Left ventricle myocardium inferior (tissue), 1 donor: ENCODE measurements at regions of chr22 and their contacts with region 1.

Region 1: DNA sequence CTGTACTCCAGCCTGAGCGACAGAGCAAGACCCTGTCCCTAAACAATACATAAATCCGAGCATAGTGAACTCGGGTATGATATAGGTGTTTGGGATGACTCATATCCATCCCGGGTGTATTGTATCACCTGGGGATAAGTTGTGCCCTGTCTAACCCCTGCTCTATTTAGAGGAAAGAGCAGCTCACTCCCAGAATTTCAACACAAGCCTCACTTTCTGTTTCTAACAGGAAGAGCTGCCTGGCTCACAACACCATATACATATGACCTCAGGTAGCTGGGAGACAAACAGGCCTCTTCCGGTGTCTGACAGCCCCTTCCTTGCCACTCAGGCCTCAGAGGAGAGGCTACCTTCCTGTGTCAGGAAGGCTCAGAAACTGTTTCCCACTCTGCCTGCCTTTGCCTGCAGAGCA is 9.9 kb upstream of the MICALL1 start:
- DNase-seq: no peak
- H3K4me3 ChIP-seq: no peak overlapping the region
- H3K27ac ChIP-seq: peak overlapping the region; percentile 72
- H3K4me1 ChIP-seq: peaks cover 48% of the 10 kb centered on the region
- H3K27me3 ChIP-seq: no peaks in the 10 kb centered on the region
- CTCF ChIP-seq: no peak

Region 2: DNA sequence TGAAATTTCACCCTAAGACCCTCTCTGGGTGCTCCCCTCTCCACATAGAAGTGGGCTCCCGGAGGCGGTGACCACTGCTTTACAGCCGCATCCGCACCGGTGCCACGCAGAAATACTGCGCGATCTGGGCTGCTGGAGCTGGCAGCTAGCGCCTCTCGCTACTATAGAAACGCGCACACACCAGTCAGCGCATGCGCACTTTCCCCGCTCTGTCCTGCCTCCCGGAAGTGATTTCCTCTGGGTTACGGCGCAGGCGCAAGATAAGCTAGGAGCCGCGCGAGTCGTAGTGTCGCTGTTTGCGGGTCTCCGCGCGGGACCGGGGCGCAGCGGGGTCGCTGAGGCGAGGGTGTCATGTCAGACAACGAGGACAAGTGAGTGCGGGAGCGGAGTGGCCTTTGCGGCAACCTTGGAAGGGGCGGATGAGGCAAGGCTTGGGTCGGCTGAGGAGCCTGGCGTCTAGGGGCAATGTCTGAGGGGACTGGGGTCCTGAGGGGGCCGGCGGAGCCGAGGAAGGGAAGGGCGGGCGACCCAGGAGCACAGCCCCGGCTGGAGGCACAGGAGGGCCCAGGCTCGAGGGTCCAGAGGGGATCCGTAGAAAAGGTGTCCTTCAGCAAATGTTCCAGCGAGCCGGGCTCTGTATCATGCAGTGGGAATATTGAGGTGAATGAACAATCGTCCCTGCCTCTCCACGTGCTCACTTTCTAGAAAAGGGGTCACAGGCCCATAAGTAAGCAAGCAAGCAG is 57.4 kb after region 1 on chr22 and contains the starts of genes C22orf23 and POLR2F:
- intact Hi-C with region 1: loop called (anchors 10 kb)
- DNase-seq: peak; percentile 96
- H3K4me3 ChIP-seq: peak within 1 kb of the TSS; percentile 92
- H3K27ac ChIP-seq: peak within 1 kb of the TSS; percentile 76
- H3K4me1 ChIP-seq: peaks cover 34% of the 10 kb centered on the region
- H3K27me3 ChIP-seq: no peaks in the 10 kb centered on the region
- CTCF ChIP-seq: peak; percentile 7
- total RNA-seq, gene C22orf23: 0.82 TPM
- total RNA-seq, gene POLR2F: 79.3 TPM

Region 3: GRCh38 chr22:38032681-38033521 is 136.7 kb after region 1 on chr22:
- intact Hi-C with region 1: no loop called
- DNase-seq: no peak
- H3K4me3 ChIP-seq: no peak overlapping the region
- H3K27ac ChIP-seq: peak overlapping the region; percentile 64
- H3K4me1 ChIP-seq: peaks cover 29% of the 10 kb centered on the region
- H3K27me3 ChIP-seq: no peaks in the 10 kb centered on the region
- CTCF ChIP-seq: no peak